ENCODE measurements at regions of chr18 and their contacts with region 1.

Region 1: DNA sequence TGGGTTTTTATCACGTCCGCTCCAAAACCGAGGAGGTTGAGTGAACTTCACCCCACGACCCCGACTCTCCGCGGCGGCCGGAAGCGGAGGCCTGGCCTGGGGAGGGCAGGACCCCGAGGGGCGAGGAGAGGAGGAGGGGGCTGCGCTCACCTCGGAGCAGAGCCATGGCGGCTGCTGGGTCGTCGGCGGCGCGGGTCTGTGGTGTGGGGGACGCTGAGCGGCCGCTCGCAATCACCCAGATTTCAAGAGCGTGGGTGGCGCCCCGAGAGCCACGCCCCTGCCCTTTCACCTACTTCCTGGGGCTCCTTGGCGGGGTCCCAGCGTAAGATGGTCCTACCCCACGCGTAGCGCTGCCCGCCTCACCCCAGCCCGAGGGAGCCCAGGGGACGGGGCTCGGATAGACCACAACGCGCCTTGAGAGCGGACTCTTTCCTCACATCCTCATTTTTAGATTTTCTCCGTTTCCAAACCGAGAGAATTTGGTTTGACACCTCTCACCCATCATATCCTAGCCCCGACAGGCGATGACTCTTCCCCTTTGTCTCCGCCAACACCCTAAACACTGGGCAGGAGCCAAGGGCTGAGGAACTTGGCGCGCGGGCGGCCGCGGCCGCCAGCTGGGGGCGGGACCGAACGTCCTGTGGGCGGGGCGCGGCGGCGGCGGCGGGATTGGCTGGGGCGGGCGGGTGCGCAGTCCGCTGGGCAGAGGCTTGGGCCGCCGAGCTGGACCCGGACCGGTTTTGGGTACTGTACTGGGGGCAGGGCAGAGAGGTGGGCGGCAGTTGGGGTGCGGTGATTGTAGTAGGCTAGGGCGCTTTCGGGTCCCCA is at the start of gene ACAA2:
- DNase-seq: peak; percentile 76
- H3K4me3 Mint-ChIP-seq: peak within 1 kb of the TSS; percentile 89
- H3K27ac Mint-ChIP-seq: peak within 1 kb of the TSS; percentile 98
- H3K4me1 Mint-ChIP-seq: peaks cover 53% of the 10 kb centered on the region
- H3K27me3 Mint-ChIP-seq: no peaks in the 10 kb centered on the region
- total RNA-seq, gene ACAA2: 82.9 and 85.7 TPM in 2 replicates

Region 2: DNA sequence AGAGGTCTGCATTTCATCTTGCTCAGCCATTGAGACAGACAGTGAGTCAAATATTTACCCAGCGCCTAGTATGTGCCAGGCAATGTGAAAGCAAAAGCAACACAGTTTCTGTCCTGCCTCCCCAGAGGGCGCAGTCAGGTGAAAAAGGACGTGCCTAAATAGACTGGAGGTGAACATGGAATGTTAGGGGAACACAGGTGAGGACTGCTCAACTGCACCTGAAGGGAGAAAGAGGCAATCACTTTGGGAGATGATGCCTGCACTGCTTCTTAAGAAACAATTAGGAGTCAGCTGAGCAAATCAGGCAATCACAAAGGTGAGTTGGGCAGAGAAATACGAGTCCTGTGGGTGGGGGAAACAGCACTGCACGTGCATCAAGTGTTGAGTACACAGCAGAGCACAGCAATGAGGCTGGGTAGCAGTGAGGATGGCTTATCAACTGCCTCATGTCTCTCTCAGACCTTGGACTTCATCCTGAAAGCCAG is 644.5 kb before region 1 on chr18:
- intact Hi-C with region 1: loop called (anchors 10 kb)
- DNase-seq: peak; percentile 11
- H3K4me3 Mint-ChIP-seq: no peak overlapping the region
- H3K27ac Mint-ChIP-seq: no peak overlapping the region
- H3K4me1 Mint-ChIP-seq: peaks cover 43% of the 10 kb centered on the region
- H3K27me3 Mint-ChIP-seq: peaks cover 2% of the 10 kb centered on the region

Region 3: GRCh38 chr18:49486953-49487710 is 326.4 kb before region 1 on chr18 and contains the start of gene C18orf32:
- intact Hi-C with region 1: loop called (anchors 2 kb)
- DNase-seq: peak; percentile 91
- H3K4me3 Mint-ChIP-seq: peak within 1 kb of the TSS; percentile 98
- H3K27ac Mint-ChIP-seq: peak within 1 kb of the TSS; percentile 98
- H3K4me1 Mint-ChIP-seq: peaks cover 44% of the 10 kb centered on the region
- H3K27me3 Mint-ChIP-seq: no peaks in the 10 kb centered on the region
- total RNA-seq, gene C18orf32: 21.7 and 22.6 TPM in 2 replicates

Region 4: GRCh38 chr18:49784427-49785185 is 28.9 kb before region 1 on chr18:
- intact Hi-C with region 1: loop called (anchors 2 kb)
- DNase-seq: no peak
- H3K4me3 Mint-ChIP-seq: no peak overlapping the region
- H3K27ac Mint-ChIP-seq: no peak overlapping the region
- H3K4me1 Mint-ChIP-seq: peaks cover 34% of the 10 kb centered on the region
- H3K27me3 Mint-ChIP-seq: no peaks in the 10 kb centered on the region

Region 5: GRCh38 chr18:49795612-49796552 is 17.7 kb before region 1 on chr18:
- intact Hi-C with region 1: loop called (anchors 2 kb)
- DNase-seq: no peak
- H3K4me3 Mint-ChIP-seq: no peak overlapping the region
- H3K27ac Mint-ChIP-seq: peak overlapping the region; percentile 44
- H3K4me1 Mint-ChIP-seq: peaks cover 17% of the 10 kb centered on the region
- H3K27me3 Mint-ChIP-seq: no peaks in the 10 kb centered on the region

Region 6: DNA sequence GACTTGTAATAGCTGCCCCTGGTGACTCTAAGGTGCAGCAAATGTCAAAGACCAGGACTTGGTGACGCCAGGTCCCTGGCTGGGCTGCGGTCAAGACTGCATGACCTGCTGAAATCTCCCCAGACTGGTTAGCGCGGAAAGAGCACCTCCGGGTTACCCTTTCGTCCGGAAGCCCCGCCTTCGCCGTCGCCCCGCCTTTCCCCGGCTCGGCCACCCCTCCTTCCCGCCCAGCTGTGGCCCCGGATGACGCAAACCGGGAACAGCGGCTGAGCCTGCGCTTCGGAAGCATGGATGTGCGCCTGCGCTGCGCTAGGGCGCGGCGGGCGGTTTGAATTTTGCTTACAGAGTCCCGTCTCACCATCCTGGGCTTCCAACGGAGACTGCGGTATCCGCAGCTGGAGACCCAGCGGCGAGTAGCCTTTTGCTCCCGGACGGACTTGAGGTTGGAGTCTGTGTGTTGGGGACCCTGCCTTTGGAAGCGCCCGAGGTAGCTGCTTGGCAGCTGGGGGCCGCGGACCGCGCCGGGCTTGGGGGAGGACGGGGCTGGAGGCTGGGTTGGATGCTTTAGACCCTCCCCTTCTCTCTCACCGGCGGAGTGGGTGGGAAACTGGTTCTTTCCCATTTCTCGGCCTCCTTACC is 561.3 kb after region 1 on chr18 and contains the start of gene SKA1:
- intact Hi-C with region 1: loop called (anchors 5 kb)
- DNase-seq: peak; percentile 87
- H3K4me3 Mint-ChIP-seq: peak within 1 kb of the TSS; percentile 87
- H3K27ac Mint-ChIP-seq: peak within 1 kb of the TSS; percentile 86
- H3K4me1 Mint-ChIP-seq: peaks cover 13% of the 10 kb centered on the region
- H3K27me3 Mint-ChIP-seq: peaks cover 4% of the 10 kb centered on the region
- total RNA-seq, gene SKA1: 23.5 and 23.6 TPM in 2 replicates